ENCODE measurements at regions of chr17 and their contacts with region 1.

Region 1: DNA sequence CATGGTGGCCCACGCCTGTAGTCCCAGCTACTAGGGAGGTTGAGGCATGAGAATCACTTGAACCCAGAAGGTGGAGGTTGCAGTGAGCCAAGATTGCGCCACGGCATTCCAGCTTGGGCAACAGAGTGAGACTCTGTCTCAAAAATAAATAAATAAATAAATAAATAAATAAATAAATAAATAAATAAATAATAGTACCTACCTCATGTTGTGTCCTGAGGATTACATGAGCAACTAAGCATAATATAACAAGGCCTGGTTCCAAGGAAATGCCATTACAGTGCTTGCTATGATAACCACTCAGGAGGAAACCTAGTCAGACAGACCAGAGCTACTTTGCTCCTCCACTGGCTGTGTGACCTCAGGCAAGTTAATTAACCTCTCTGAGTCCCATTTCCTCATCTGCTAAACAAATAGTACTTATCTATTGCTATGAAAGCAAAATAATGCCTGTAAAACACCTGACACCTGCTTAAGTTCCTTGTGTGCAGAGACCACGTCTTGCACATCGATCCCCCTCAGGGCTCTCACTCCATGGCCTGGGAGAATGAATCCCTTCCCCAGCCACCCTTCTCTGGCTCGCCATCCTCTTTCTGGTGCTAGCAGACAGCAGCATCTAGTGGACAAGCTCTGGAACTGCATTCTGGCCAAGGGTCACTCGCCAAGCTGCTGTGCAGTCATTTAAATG is 7.5 kb downstream of the EPOP start:
- DNase-seq: peak; percentile 66
- ATAC-seq: peak; percentile 81

Region 2: DNA sequence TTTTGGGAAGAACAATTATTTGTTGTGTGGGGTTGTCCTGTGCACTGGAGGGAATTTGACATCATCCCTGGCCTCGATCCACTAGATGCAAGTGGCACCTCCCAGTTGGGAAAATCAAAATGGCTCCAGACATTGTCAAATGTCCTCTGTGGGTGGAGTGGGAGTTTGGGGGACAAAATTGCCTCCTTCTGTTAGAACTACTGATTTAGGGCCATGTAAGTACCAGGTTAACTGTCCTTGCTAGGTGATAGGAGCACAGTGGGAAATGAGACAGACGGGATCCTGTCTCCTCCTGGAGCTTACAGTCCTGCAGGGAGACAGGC is 182.1 kb before region 1 on chr17:
- intact Hi-C with region 1: loop called (anchors 5 kb)
- DNase-seq: no peak
- ATAC-seq: no peak

Region 3: DNA sequence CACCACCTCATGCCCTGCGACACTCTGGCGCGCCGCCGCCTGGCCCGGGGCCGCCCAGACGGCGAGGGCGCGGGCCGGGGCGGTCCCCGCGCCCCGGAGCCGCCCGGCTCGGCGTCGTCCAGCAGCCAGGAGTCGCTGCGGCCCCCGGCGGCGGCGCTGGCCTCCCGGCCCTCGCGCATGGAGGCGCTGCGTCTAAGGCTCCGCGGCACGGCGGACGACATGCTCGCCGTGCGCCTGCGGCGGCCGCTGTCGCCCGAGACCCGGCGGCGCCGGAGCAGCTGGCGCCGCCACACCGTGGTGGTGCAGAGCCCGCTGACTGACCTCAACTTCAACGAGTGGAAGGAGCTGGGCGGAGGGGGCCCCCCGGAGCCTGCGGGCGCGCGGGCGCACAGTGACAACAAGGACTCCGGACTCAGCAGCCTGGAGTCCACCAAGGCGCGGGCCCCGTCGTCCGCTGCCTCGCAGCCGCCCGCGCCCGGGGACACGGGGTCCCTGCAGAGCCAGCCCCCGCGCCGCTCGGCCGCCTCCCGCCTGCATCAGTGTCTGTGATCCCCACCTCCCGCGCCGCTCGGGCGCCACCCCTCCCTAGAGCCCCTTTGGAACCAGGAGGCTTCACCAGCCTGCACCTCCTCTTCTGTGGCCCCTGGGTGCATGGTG is 156.7 kb before region 1 on chr17:
- intact Hi-C with region 1: loop called (anchors 10 kb)
- DNase-seq: peak; percentile 47
- ATAC-seq: peak; percentile 58

Region 4: DNA sequence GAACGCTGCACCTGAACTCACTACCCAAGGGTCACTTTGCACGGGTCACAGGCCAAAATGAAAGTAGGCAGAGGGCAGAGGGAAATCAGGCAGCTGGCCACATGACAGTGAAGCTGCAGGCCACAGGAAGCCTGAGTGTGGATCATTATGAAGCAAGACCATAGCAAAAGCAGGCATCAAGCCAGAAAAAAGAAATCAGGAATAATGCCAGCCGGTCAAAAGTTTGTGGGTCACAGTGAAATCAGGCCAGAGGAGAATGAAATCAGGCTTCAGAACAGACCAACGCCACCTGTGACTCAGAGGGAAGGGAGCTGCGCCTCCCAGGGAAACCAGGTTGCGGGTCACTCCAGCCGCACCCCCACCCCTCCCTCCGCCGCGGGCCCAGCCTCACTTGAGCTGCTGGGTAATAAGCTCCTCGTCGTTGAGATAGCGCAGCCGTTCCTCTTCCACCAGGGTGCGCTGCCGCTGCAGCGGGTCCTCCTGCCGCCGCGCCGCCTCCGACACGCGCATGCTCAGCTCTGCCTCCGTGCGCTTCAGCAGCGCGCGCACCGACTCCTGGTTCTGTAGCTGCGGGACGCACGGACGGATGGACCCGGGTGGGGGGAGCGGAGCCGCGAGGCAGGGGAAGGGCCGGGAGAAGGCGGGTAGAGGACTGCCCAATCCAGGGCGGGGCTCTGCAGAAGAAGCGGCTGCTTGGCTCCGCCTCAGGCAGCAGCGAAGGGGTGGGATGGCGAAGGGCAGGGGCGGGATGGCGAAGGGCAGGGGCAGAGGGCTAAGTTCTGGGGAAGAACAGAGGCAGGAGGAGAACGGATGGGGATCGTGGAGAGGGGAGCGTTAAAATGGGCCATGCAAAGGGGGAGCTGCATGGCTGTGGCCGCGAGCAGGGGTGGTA is 109.2 kb before region 1 on chr17:
- intact Hi-C with region 1: loop called (anchors 2 kb)
- DNase-seq: peak; percentile 95
- ATAC-seq: peak; percentile 97

Region 5: GRCh38 chr17:38572669-38573365 is 94.4 kb before region 1 on chr17:
- intact Hi-C with region 1: loop called (anchors 5 kb)
- DNase-seq: no peak
- ATAC-seq: no peak

Measured in Right ventricle myocardium superior (tissue), 1 donor.